Cardiac septum (tissue), 1 donor: ENCODE measurements at regions of chr3 and their contacts with region 1.

Region 1: GRCh38 chr3:119676771-119677640 is at the start of gene COX17:
- DNase-seq: peak; percentile 95
- total RNA-seq, gene COX17: 130 TPM

Region 2: GRCh38 chr3:119463171-119464169 is 213.5 kb before region 1 on chr3 and contains the start of gene TMEM39A:
- intact Hi-C with region 1: loop called (anchors 10 kb)
- DNase-seq: peak; percentile 100
- total RNA-seq, gene TMEM39A: 18.3 TPM

Region 3: GRCh38 chr3:119524931-119525662 is 151.9 kb before region 1 on chr3:
- intact Hi-C with region 1: loop called (anchors 5 kb)
- DNase-seq: no peak

Region 4: GRCh38 chr3:119600732-119601131 is 76.3 kb before region 1 on chr3:
- intact Hi-C with region 1: loop called (anchors 5 kb)
- DNase-seq: no peak